CD8-positive, alpha-beta memory T cell (primary cell): ENCODE measurements at regions of chr6 and their contacts with region 1.

Region 1: GRCh38 chr6:33904050-33904746 is 100.4 kb upstream of the MLN start:
- DNase-seq: peak; percentile 59 to 88 (median 84)
- H3K4me3 ChIP-seq: peak overlapping the region; percentile 37
- H3K4me3 Mint-ChIP-seq: peak overlapping the region; percentile 20 to 76 (median 70)
- H3K27ac ChIP-seq: peak overlapping the region; percentile 62
- H3K27ac Mint-ChIP-seq: peak overlapping the region; percentile 61 to 95 (median 92)
- H3K4me1 ChIP-seq: peaks cover 68% of the 10 kb centered on the region
- H3K4me1 Mint-ChIP-seq: peaks cover 64 to 78% (median 69%) of the 10 kb centered on the region in 3 donors
- H3K27me3 ChIP-seq: no peaks in the 10 kb centered on the region
- H3K27me3 Mint-ChIP-seq: peaks cover 0 to 2% of the 10 kb centered on the region in 2 donors

Region 2: DNA sequence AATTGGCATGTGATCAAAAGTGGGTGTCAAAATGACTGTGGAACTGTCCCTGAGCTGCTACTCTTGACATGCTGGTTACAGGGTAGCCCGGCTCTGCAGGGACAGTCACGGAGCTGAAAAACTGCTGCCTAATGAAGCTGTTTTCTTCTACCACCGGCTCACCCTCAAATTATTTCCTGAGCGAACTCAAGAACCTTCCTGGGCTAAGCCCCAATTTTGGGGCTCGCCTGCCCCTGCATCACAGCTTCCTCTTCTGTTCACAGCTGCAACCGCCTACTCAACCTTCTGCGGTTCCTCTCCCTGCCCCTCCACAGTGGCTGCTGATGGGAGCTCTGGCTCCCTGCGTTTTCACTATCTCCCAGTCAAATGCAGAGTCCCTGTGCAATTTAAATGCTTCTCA is 10.4 kb after region 1 on chr6:
- CTCF ChIA-PET with region 1: interaction called, 10 read pairs
- POLR2A ChIA-PET with region 1: interaction called, 19 read pairs
- DNase-seq: peak; percentile 22 to 66 (median 52)
- H3K4me3 ChIP-seq: peak overlapping the region; percentile 5
- H3K4me3 Mint-ChIP-seq: peak overlapping the region; percentile 7 to 87 (median 81)
- H3K27ac ChIP-seq: no peak overlapping the region
- H3K27ac Mint-ChIP-seq: peak overlapping the region; percentile 10 to 90 (median 81)
- H3K4me1 ChIP-seq: peaks cover 39% of the 10 kb centered on the region
- H3K4me1 Mint-ChIP-seq: peaks cover 45 to 62% (median 59%) of the 10 kb centered on the region in 3 donors
- H3K27me3 ChIP-seq: no peaks in the 10 kb centered on the region
- H3K27me3 Mint-ChIP-seq: peaks cover 0 to 1% of the 10 kb centered on the region in 2 donors

Region 3: GRCh38 chr6:34236131-34236996 is 332.2 kb after region 1 on chr6 and contains the start of gene HMGA1:
- CTCF ChIA-PET with region 1: no interaction called
- POLR2A ChIA-PET with region 1: no interaction called
- DNase-seq: peak; percentile 83 to 94 (median 87)
- H3K4me3 ChIP-seq: peak within 1 kb of the TSS; percentile 78
- H3K4me3 Mint-ChIP-seq: peak within 1 kb of the TSS; percentile 88 to 93 (median 92)
- H3K27ac ChIP-seq: peak within 1 kb of the TSS; percentile 90
- H3K27ac Mint-ChIP-seq: peak within 1 kb of the TSS; percentile 95 to 99 (median 97)
- H3K4me1 ChIP-seq: peaks cover 27% of the 10 kb centered on the region
- H3K4me1 Mint-ChIP-seq: peaks cover 25 to 45% (median 32%) of the 10 kb centered on the region in 3 donors
- H3K27me3 ChIP-seq: no peaks in the 10 kb centered on the region
- H3K27me3 Mint-ChIP-seq: no peaks in the 10 kb centered on the region
- total RNA-seq, gene HMGA1: 490 to 506 TPM